Activated T-helper 2 cell treated with anti-CD3 and anti-CD28 coated beads, Interferon-gamma antibody, Interleukin-2, Interleukin-4, amounts not matched to agents 10 μg/mL and 5 μg/mL and 100 μg/mL, durations not matched to agents 14 hours and 24 hours and 36 hours (primary cell): ENCODE measurements at regions of chr9 and their contacts with region 1.

Region 1: GRCh38 chr9:98896632-98897031 is 47.1 kb upstream of the COL15A1 start:
- DNase-seq: no peak
- H3K4me3 Mint-ChIP-seq: no peak overlapping the region
- H3K27ac Mint-ChIP-seq: no peak overlapping the region
- H3K4me1 Mint-ChIP-seq: no peaks in the 10 kb centered on the region
- H3K27me3 Mint-ChIP-seq: peaks cover 12% of the 10 kb centered on the region

Region 2: DNA sequence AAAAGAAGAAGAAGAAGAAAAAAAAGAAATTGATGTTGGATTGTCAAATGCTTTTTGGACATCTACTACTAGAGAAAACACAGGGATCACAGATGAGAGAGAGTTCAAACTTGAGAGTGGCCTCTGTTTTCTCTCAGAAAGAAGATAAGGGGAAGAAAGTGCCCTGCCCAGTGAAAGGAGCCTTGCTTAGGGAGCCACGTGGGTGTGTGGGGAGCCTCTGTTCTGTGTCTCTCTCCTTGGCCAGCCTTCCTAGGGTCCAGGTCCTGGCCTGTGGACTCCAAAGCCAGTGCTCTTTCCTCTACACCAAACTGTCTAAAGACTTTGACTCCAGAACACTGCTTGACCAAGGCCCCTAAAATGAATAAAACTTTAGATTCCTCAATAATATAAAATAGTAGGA is 25.1 kb after region 1 on chr9:
- intact Hi-C with region 1: loop called (anchors 1 kb)
- DNase-seq: no peak
- H3K4me3 Mint-ChIP-seq: no peak overlapping the region
- H3K27ac Mint-ChIP-seq: no peak overlapping the region
- H3K4me1 Mint-ChIP-seq: no peaks in the 10 kb centered on the region
- H3K27me3 Mint-ChIP-seq: peaks cover 9% of the 10 kb centered on the region

Region 3: GRCh38 chr9:99019790-99020331 is 123.2 kb after region 1 on chr9:
- intact Hi-C with region 1: no loop called
- DNase-seq: no peak
- H3K4me3 Mint-ChIP-seq: no peak overlapping the region
- H3K27ac Mint-ChIP-seq: no peak overlapping the region
- H3K4me1 Mint-ChIP-seq: peaks cover 2% of the 10 kb centered on the region
- H3K27me3 Mint-ChIP-seq: peaks cover 17% of the 10 kb centered on the region